H1 (cell line): ENCODE measurements at regions of chr3 and their contacts with region 1.

Region 1: DNA sequence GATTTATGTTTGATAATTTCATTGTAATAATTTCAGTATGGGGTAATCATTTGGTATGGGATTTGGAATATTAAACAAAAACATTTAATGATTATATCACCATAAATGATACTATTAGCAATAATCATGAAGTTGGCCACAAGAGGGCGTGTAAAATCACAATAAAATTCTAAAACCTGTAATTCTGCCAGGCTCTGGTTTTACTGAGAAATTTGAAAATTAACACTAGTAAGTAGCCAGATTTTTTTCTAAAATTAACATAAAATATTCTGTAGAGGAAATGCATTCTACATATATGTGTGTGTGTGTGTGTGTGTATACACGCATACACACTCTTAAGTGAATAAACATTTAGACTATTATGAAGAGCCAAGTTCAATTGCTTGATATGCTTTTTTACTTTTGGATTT is 40.5 kb downstream of the FEZF2 start:
- DNase-seq: no peak
- H3K4me3 ChIP-seq: no peak overlapping the region
- H3K27ac ChIP-seq: no peak overlapping the region
- H3K4me1 ChIP-seq: peaks cover 0 to 3% (median 0%) of the 10 kb centered on the region in 4 experiments; a peak in 1 of 7 replicates
- H3K27me3 ChIP-seq: no peaks in the 10 kb centered on the region
- CTCF ChIP-seq: peak in 1 of 3 experiments; percentile 27; a peak in 1 of 4 replicates
- EP300 ChIP-seq: no peak
- POLR2A ChIP-seq: no peak
- RAD21 ChIP-seq: peak in 1 of 2 experiments; percentile 48

Region 2: GRCh38 chr3:62101488-62101887 is 231.4 kb before region 1 on chr3:
- CTCF ChIA-PET with region 1: no interaction called
- POLR2A ChIA-PET with region 1: no interaction called
- DNase-seq: no peak
- H3K4me3 ChIP-seq: no peak overlapping the region
- H3K27ac ChIP-seq: no peak overlapping the region
- H3K4me1 ChIP-seq: no peaks in the 10 kb centered on the region
- H3K27me3 ChIP-seq: no peaks in the 10 kb centered on the region
- CTCF ChIP-seq: no peak
- EP300 ChIP-seq: no peak
- POLR2A ChIP-seq: no peak
- RAD21 ChIP-seq: no peak

Region 3: DNA sequence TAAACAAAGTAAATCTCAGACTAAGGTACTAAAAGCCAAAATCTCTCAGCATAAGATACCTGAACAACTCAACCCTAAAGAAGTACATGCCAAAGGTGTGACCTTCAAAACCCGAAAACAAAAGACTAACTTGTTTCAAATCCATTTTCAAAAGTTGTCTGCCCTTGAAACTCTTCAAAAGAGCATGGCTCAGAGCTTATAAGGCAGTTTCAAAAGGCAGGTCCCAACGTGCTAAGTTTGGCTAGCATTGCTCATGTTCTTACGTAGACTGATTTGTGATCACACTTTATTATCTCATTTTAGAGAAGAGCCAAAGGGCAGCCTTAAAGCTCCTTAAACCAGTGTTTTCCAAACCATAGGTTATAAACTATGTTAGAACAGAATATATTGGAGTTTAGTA is 71.7 kb before region 1 on chr3:
- CTCF ChIA-PET with region 1: no interaction called
- POLR2A ChIA-PET with region 1: no interaction called
- DNase-seq: no peak
- H3K4me3 ChIP-seq: no peak overlapping the region
- H3K27ac ChIP-seq: no peak overlapping the region
- H3K4me1 ChIP-seq: no peaks in the 10 kb centered on the region
- H3K27me3 ChIP-seq: no peaks in the 10 kb centered on the region
- CTCF ChIP-seq: no peak
- EP300 ChIP-seq: no peak
- POLR2A ChIP-seq: no peak
- RAD21 ChIP-seq: no peak

Region 4: DNA sequence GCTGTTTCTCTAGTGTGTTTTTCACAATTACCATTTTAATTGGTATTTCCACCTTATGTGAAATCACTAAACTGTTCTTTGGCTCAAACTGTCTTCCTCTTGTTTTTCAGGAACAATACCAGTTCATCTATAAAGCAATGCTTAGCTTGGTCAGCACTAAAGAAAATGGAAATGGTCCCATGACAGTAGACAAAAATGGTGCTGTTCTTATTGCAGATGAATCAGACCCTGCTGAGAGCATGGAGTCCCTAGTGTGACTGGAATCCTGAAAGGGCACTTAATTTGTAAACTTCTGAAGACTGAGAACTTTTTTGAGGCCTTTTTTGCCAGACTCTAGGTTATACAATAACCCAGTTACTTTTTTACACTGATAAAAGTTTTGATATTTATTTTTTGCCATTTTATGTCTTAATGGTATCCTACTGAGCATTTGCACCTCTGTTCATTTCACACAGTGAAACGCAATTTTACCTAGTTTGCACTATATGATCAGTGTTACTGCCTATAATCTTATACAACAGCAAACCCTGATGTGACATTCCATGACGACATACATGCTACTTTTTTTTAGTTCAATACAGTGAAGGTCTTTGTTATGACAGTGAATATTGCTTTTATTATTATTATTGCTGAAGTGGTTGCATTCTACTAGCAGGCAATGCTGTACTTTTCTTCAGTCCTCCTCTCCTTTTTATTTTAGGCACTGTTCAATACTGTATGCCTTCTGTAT is 39.6 kb before region 1 on chr3:
- CTCF ChIA-PET with region 1: no interaction called
- POLR2A ChIA-PET with region 1: no interaction called
- DNase-seq: no peak
- H3K4me3 ChIP-seq: no peak overlapping the region
- H3K27ac ChIP-seq: no peak overlapping the region
- H3K4me1 ChIP-seq: no peaks in the 10 kb centered on the region
- H3K27me3 ChIP-seq: no peaks in the 10 kb centered on the region
- CTCF ChIP-seq: no peak
- EP300 ChIP-seq: no peak
- POLR2A ChIP-seq: no peak
- RAD21 ChIP-seq: no peak

Region 5: DNA sequence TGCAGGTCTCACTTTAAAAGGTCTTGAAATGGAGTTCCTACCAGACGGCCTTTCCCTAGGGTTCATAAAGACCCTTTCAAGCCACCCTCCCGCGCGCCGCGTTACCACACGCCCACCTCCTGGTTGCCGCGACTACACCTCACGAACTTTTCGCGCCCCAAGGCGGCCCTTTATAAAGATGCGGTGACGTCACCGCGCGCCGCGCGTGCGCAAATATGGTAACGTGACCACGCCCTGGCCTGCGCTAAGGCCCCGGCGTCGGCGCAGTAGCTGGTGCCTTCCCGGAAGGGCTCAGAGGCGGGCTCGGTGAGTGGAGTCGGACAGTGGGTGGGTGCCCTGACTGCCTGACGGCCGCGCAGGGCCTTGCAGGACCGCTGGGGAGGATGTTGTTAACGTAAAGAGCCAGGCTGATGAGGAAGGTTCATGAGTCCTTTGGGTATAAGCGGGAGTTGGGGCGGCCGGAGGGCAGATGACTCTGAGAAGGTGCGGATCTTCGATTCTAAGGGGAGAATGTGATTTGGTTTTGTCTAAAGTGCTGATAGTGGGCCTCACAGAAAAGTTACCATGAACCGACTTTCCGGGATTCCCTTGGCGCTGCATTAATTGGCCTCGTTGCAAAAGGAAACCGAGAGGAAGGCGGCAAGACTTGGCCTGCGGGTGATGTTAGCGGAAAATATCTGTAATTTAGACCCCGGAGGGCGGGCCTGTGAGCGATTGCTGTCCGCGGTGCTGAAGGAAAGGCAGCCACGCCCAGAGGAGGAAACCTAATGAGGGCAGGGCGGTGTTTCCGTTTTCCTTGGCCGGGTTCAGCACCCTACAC is 13.9 kb before region 1 on chr3:
- CTCF ChIA-PET with region 1: interaction called, 12 read pairs
- POLR2A ChIA-PET with region 1: interaction called, 5 read pairs
- DNase-seq: peak; percentile 79 to 88
- H3K4me3 ChIP-seq: peak overlapping the region; percentile 65 to 83 (median 76)
- H3K27ac ChIP-seq: peak overlapping the region; percentile 42; the same call in 1 of the 2 replicates
- H3K4me1 ChIP-seq: peaks cover 0 to 3% (median 0%) of the 10 kb centered on the region in 4 experiments; a peak in 2 of 7 replicates
- H3K27me3 ChIP-seq: no peaks in the 10 kb centered on the region; a peak in 2 of 7 replicates
- CTCF ChIP-seq: no peak
- EP300 ChIP-seq: no peak
- POLR2A ChIP-seq: peak; percentile 93 to 95
- RAD21 ChIP-seq: no peak; a peak in 1 of 4 replicates

Region 6: GRCh38 chr3:62359531-62359930 is 26.7 kb after region 1 on chr3:
- CTCF ChIA-PET with region 1: interaction called, 17 read pairs
- POLR2A ChIA-PET with region 1: no interaction called
- DNase-seq: no peak
- H3K4me3 ChIP-seq: no peak overlapping the region
- H3K27ac ChIP-seq: no peak overlapping the region
- H3K4me1 ChIP-seq: no peaks in the 10 kb centered on the region
- H3K27me3 ChIP-seq: peaks cover 6 to 51% (median 35%) of the 10 kb centered on the region in 4 experiments
- CTCF ChIP-seq: no peak
- EP300 ChIP-seq: no peak
- POLR2A ChIP-seq: no peak
- RAD21 ChIP-seq: no peak

Region 7: DNA sequence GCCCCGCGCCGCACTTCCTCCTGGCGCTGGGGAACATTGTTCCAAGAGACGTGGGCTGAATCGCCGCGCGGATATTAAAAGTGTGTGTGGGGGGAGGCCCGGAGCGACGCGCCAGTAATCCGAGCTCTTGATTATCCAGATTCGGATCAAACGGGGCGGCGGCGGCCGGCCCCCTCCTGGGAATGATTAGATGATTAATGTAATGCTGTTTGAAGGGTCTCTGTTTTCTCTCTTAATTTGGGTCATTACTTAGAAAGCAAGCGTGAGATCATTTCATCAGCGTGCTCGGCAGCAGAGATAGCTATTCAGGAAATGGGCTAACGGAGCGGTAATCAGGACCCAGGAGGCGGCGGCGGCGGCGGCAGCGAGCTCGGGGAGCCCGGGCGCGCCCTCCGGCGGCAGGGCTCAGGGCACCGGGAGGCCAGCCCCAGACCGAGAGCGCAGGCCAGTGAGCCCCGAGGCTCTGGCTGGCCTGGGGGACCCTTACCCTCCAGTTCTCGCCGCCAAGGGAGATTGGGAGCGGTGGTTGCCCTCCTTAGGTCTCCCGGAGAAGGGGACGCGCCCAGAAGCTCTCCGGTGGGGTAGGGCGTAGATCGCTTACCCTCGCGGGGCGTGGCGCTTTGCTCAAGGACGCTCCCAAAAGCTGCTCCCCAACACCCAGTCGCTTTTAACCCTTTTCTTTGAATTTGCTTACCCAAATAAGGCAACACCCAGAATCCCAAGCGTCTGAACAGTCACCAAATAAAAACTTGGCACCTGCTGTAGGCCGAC is 36.0 kb after region 1 on chr3:
- CTCF ChIA-PET with region 1: interaction called, 20 read pairs
- POLR2A ChIA-PET with region 1: no interaction called
- DNase-seq: peak in 1 of 2 experiments; percentile 83
- H3K4me3 ChIP-seq: peak overlapping the region; percentile 46 to 60 (median 52)
- H3K27ac ChIP-seq: no peak overlapping the region
- H3K4me1 ChIP-seq: peaks cover 18 to 60% (median 40%) of the 10 kb centered on the region in 4 experiments
- H3K27me3 ChIP-seq: peaks cover 83 to 100% (median 97%) of the 10 kb centered on the region in 4 experiments
- CTCF ChIP-seq: peak in 2 of 3 experiments; percentile 58 to 61; a peak in 3 of 4 replicates
- EP300 ChIP-seq: peak in 1 of 2 experiments; percentile 81; a peak in 1 of 3 replicates
- POLR2A ChIP-seq: no peak
- RAD21 ChIP-seq: peak; percentile 37 to 49; a peak in 3 of 4 replicates